Esophagus muscularis mucosa (tissue), 4 donors: ENCODE measurements at regions of chr19 and their contacts with region 1.

Region 1: GRCh38 chr19:38544034-38544958 is 73.5 kb downstream of the MAP4K1 start:
- DNase-seq: no peak
- H3K4me3 ChIP-seq: peak overlapping the region in 2 of 4 donors; percentile 8 to 43
- H3K27ac ChIP-seq: peak overlapping the region in 1 of 4 donors; percentile 51
- H3K4me1 ChIP-seq: peaks cover 0 to 22% (median 17%) of the 10 kb centered on the region in 4 donors
- H3K27me3 ChIP-seq: no peaks in the 10 kb centered on the region
- CTCF ChIP-seq: peak; percentile 61 to 63 (median 62)
- EP300 ChIP-seq: no peak
- POLR2A ChIP-seq: no peak

Region 2: DNA sequence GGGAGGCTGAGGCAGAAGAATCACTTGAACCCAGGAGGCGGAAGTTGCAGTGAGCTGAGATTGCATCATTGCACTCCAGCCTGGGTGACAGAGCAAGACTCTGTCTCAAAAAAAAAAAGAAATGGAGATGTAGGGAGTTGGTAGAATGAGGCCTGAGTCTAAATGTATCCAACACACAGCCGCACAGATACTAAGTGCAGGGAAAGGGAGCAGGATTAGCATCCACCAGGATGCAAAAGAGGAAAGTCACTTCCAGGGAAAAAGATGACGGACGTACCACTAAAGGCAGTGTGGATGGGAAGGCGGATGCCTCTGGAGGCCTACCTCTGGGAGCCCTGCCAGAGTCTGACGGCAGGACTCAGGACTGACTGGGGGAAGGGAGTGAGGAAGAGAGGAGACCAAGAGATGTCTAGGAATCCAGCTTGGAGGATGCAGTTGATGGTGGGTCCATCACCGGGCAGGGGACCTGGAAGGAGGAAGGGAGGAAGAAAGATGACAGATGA is 134.6 kb before region 1 on chr19:
- intact Hi-C with region 1: no loop called
- DNase-seq: no peak
- H3K4me3 ChIP-seq: no peak overlapping the region
- H3K27ac ChIP-seq: no peak overlapping the region
- H3K4me1 ChIP-seq: peaks cover 0 to 2% (median 0%) of the 10 kb centered on the region in 4 donors
- H3K27me3 ChIP-seq: peaks cover 0 to 14% (median 0%) of the 10 kb centered on the region in 4 donors
- CTCF ChIP-seq: no peak
- EP300 ChIP-seq: no peak
- POLR2A ChIP-seq: no peak

Region 3: GRCh38 chr19:38606131-38606530 is 61.8 kb after region 1 on chr19:
- intact Hi-C with region 1: loop called (anchors 10 kb)
- DNase-seq: no peak
- H3K4me3 ChIP-seq: no peak overlapping the region
- H3K27ac ChIP-seq: no peak overlapping the region
- H3K4me1 ChIP-seq: no peaks in the 10 kb centered on the region
- H3K27me3 ChIP-seq: no peaks in the 10 kb centered on the region
- CTCF ChIP-seq: no peak
- EP300 ChIP-seq: no peak
- POLR2A ChIP-seq: no peak

Region 4: DNA sequence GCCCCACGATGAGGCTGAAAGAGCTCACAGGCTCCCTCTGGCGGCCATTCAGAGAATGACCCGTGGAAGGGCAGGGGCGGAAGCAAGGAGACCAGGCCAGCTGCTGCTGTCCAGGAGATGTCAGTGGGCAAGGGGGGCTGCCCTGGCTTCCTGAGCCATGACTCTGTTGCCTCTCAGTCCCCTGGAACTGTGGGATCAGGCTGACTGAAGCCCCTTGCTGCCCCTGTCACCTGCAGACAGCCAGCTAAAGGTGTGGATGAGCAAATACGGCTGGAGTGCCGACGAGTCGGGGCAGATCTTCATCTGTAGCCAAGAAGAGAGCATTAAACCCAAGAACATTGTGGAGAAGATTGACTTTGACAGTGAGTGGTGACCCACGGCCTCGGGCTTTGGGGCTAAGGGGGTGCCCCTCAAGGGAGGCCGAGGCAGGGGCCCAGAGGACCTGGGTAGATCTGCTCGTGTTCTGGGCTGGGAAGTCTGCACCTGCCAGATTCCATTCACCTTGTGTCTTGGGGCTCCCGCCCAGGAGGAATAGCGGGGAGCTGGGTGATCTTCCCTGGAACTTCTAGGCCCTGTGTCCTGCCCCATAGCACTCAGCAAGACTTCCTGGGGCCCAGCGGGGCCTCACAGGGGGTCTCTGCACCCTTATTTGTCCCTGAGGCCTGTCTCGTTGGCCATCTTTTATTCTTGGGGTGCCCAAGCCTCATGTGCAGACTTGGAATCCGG is 90.6 kb after region 1 on chr19:
- intact Hi-C with region 1: loop called (anchors 2 kb)
- DNase-seq: no peak
- H3K4me3 ChIP-seq: no peak overlapping the region
- H3K27ac ChIP-seq: peak overlapping the region; percentile 39 to 67 (median 54)
- H3K4me1 ChIP-seq: peaks cover 18 to 32% (median 25%) of the 10 kb centered on the region in 4 donors
- H3K27me3 ChIP-seq: no peaks in the 10 kb centered on the region
- CTCF ChIP-seq: peak in 2 of 3 experiments; percentile 94
- EP300 ChIP-seq: no peak
- POLR2A ChIP-seq: no peak

Region 5: GRCh38 chr19:38929929-38930775 is 385.9 kb after region 1 on chr19 and contains the start of gene SARS2:
- intact Hi-C with region 1: loop called (anchors 10 kb)
- DNase-seq: peak; percentile 99
- H3K4me3 ChIP-seq: peak within 1 kb of the TSS; percentile 65 to 75 (median 68)
- H3K27ac ChIP-seq: peak within 1 kb of the TSS; percentile 85 to 90 (median 88)
- H3K4me1 ChIP-seq: peaks cover 29 to 33% (median 31%) of the 10 kb centered on the region in 4 donors
- H3K27me3 ChIP-seq: no peaks in the 10 kb centered on the region
- CTCF ChIP-seq: peak in 2 of 3 experiments; percentile 100
- EP300 ChIP-seq: no peak
- POLR2A ChIP-seq: no peak
- total RNA-seq, gene SARS2: 6.8 to 14.6 (median 9.1) TPM